ENCODE measurements at regions of chr1 and their contacts with region 1.

Region 1: DNA sequence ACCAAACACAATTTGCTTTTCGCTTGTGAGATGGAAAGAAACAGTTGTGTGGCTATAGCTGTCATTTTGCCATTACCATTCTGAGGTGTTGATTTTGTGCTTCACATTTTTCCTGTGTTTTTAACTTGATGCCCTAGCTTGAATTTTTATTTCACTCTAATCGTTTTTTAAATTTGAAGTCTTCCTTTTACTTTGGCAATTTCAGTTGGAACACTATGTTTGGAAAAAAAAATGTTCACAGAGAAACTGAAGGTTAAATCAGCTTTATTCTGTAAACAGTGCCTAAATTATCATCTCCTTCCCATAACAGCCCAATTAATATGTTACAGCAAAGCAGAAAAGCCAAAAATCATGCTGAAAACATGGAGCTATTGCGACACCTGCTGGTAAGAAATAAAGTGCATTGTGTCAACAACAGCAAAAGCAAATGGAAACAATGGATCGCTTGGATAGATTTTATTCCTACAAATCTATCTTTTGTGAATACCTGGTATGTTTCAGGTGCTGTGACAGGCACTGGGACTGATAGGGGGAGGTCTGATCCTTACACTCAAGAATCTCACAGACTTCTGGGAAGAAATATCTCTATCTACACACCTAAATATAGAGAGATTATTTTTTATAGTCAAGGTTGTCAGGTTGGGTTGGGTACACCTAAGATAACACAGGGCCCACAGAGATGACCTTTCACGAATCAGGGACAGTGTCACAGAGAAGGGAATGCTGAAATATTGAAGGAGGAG is 16.2 kb upstream of the ERICH3 start:
- DNase-seq: peak; percentile 72
- H3K4me3 Mint-ChIP-seq: no peak overlapping the region
- H3K27ac Mint-ChIP-seq: no peak overlapping the region
- H3K4me1 Mint-ChIP-seq: peaks cover 6% of the 10 kb centered on the region
- H3K27me3 Mint-ChIP-seq: no peaks in the 10 kb centered on the region
- CTCF ChIP-seq: peak; percentile 80

Region 2: GRCh38 chr1:73839922-73840321 is 849.9 kb before region 1 on chr1:
- CTCF ChIA-PET with region 1: interaction called, 6 read pairs
- POLR2A ChIA-PET with region 1: no interaction called
- intact Hi-C with region 1: loop called (anchors 2 kb)
- DNase-seq: peak; percentile 49
- H3K4me3 Mint-ChIP-seq: no peak overlapping the region
- H3K27ac Mint-ChIP-seq: no peak overlapping the region
- H3K4me1 Mint-ChIP-seq: no peaks in the 10 kb centered on the region
- H3K27me3 Mint-ChIP-seq: no peaks in the 10 kb centered on the region
- CTCF ChIP-seq: peak; percentile 46

Region 3: DNA sequence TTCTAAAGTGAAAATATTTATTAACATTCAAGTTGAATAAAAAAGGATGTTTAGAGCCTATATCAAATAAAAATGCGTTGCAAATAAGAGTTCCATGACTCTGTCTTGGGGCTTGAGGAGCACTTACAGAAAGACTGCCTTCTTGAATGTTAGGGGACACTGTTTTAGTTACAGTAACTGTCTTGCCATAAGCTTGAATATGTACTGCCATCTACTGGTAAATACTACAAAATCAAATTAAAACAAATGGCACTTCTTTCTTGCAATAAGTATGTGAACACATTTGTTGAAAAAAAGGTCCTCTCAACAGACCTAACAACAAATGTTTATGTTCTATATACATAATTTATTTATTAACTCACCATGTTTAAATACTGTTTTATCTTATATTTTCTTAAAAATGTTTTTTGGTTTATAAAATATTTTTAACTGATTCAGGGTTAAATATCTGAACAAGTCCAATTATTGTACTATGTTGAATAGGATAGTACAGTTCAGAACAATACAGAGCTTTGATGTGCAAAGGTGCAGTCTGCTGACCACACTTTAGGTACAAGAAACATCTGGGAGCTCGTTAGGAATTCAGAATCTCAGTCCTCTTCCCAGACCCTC is 691.3 kb before region 1 on chr1:
- CTCF ChIA-PET with region 1: interaction called, 3 read pairs
- POLR2A ChIA-PET with region 1: no interaction called
- intact Hi-C with region 1: loop called (anchors 10 kb)
- DNase-seq: peak; percentile 40
- H3K4me3 Mint-ChIP-seq: no peak overlapping the region
- H3K27ac Mint-ChIP-seq: no peak overlapping the region
- H3K4me1 Mint-ChIP-seq: no peaks in the 10 kb centered on the region
- H3K27me3 Mint-ChIP-seq: no peaks in the 10 kb centered on the region
- CTCF ChIP-seq: peak; percentile 36

Region 4: DNA sequence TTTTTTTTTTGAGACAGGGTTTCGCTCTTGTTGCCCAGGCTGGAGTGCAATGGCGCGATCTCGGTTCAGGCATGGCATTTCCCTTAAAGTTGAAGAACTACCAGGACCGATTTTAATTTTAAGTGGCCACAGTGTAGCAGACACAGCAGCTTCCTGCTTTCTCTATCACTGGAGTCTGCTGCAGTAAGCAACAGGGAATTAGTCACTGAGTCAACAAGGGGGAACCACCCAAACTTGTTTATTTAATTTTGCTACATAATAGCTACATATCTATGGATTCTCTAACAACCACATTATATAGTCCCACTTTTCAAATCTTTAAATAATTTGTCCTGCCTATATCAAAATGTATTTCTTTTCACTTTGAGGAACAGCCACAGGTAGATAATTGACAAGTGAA is 467.1 kb before region 1 on chr1:
- CTCF ChIA-PET with region 1: no interaction called
- POLR2A ChIA-PET with region 1: no interaction called
- intact Hi-C with region 1: no loop called
- DNase-seq: peak; percentile 6
- H3K4me3 Mint-ChIP-seq: no peak overlapping the region
- H3K27ac Mint-ChIP-seq: no peak overlapping the region
- H3K4me1 Mint-ChIP-seq: no peaks in the 10 kb centered on the region
- H3K27me3 Mint-ChIP-seq: no peaks in the 10 kb centered on the region
- CTCF ChIP-seq: no peak

Region 5: DNA sequence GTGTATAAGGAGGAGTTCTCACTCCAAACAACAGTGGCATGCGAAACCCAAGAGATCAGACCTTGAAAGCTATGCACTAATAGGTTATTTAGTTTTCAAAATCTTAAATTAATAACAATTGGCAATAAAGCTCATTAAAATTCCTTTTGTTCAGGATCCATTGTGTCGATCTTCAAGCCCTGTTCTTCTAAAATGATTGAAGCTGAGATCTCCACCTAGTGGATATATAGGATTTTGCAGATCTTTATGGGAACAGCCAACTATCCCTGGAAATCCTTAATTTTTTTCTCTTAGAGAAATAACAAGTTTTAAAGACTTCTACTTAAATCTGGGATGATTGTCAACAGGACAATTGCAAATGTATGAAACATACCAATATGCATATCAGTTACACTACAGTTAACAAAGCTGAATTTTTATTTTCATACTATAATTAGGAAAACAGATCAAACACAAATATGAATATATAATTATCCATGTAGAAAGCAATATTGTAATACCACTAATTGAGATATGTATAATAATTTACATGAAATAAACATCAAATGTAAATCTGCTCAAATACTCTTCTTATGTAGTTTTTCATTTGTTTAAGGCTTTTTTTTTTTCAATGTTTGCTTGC is 220.7 kb before region 1 on chr1:
- CTCF ChIA-PET with region 1: interaction called, 3 read pairs
- POLR2A ChIA-PET with region 1: no interaction called
- intact Hi-C with region 1: loop called (anchors 10 kb)
- DNase-seq: peak; percentile 59
- H3K4me3 Mint-ChIP-seq: no peak overlapping the region
- H3K27ac Mint-ChIP-seq: no peak overlapping the region
- H3K4me1 Mint-ChIP-seq: peaks cover 10% of the 10 kb centered on the region
- H3K27me3 Mint-ChIP-seq: peaks cover 18% of the 10 kb centered on the region
- CTCF ChIP-seq: peak; percentile 67

Region 6: DNA sequence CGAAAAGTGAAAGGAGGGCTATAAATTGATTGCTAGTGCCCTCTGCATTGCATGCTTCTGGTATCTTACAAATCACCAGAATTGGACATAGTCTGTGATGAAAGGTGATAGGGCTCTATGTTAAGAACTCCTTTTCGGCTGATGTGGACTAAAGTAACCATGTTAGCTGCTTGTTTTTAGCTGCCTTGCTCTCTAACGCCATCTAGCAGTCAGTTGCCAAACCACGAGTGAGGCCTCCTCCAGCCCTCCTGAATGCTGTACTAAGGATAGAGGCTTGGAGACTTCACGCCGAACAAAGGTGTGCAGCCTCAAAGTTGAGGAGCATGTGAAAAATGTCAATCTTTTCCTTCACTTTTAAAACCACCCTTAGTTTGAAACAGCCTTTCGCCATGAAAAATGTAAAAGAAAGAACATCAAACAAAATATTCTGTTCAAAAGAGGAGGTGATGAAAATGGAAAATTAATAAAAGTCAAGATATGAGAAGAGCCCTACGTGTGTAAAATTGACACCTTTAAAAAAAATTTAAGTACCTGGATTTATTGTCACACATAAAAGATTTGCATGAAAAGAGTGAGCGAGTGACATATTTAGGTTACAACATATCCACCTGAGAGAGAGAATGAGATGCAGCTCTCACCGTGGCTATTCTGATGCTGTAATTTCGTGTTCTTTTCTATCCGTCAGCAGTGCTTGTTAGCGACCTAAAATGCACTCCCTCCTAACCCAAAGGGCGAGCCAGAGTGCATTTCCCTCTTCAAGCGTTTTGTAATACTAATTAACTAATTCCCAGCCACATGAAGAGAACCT is 185.5 kb before region 1 on chr1:
- CTCF ChIA-PET with region 1: no interaction called
- POLR2A ChIA-PET with region 1: no interaction called
- intact Hi-C with region 1: loop called (anchors 5 kb)
- DNase-seq: peak; percentile 71
- H3K4me3 Mint-ChIP-seq: no peak overlapping the region
- H3K27ac Mint-ChIP-seq: no peak overlapping the region
- H3K4me1 Mint-ChIP-seq: no peaks in the 10 kb centered on the region
- H3K27me3 Mint-ChIP-seq: no peaks in the 10 kb centered on the region
- CTCF ChIP-seq: peak; percentile 71

Region 7: DNA sequence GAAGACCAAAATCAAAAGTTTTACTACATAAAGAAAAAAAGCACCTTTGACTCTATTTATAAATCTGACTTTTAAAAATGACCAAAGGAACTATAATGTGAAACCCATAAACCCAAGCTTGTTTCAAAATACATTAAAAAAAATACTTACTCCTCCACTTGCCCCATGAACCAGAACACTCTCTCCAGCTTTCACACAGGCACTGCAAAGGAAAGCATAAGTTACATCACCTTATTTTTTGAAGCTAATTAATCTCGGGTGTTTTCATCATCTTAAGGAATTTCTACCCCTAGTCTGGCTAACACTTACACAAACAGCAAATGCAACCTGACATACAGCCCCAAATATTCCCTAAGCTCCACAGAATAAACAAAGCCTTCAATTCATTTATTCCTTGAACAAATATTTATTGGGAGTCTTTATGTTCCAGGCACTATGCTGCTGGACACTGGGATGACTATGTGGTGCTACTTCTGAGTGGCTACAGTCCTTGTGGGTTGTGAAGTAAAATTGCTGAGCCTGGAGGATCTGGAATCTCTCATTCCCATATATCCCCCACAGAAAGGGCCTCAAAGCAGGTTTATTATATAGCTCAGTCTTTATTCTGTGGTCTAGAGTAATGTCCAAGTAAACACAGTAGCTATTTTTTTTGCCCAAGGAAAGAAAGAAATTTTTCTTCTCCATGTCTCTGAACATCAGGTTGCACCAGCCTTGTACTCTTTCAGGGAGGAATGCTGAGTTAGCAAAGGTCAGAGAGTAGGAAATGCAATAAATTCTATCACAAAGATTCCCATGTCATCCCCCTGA is 24.8 kb after region 1 on chr1:
- CTCF ChIA-PET with region 1: interaction called, 13 read pairs
- POLR2A ChIA-PET with region 1: no interaction called
- intact Hi-C with region 1: no loop called
- DNase-seq: no peak
- H3K4me3 Mint-ChIP-seq: no peak overlapping the region
- H3K27ac Mint-ChIP-seq: no peak overlapping the region
- H3K4me1 Mint-ChIP-seq: no peaks in the 10 kb centered on the region
- H3K27me3 Mint-ChIP-seq: no peaks in the 10 kb centered on the region
- CTCF ChIP-seq: no peak

Measured in MCF 10A (cell line).